ENCODE measurements at regions of chr9 and their contacts with region 1.

Region 1: GRCh38 chr9:86486891-86487837 is 133.0 kb upstream of the TUT7 start:
- DNase-seq: no peak
- H3K4me3 Mint-ChIP-seq: no peak overlapping the region
- H3K27ac Mint-ChIP-seq: no peak overlapping the region
- H3K4me1 Mint-ChIP-seq: peaks cover 25% of the 10 kb centered on the region
- H3K27me3 Mint-ChIP-seq: no peaks in the 10 kb centered on the region
- CTCF ChIP-seq: no peak

Region 2: GRCh38 chr9:86434039-86434726 is 53.0 kb before region 1 on chr9:
- CTCF ChIA-PET with region 1: interaction called, 8 read pairs
- intact Hi-C with region 1: loop called (anchors 5 kb)
- DNase-seq: peak; percentile 20
- H3K4me3 Mint-ChIP-seq: no peak overlapping the region
- H3K27ac Mint-ChIP-seq: no peak overlapping the region
- H3K4me1 Mint-ChIP-seq: no peaks in the 10 kb centered on the region
- H3K27me3 Mint-ChIP-seq: no peaks in the 10 kb centered on the region
- CTCF ChIP-seq: peak; percentile 33

Region 3: GRCh38 chr9:86948074-86948929 is 461.1 kb after region 1 on chr9:
- CTCF ChIA-PET with region 1: no interaction called
- intact Hi-C with region 1: loop called (anchors 2 kb)
- DNase-seq: peak; percentile 70
- H3K4me3 Mint-ChIP-seq: peak overlapping the region; percentile 69
- H3K27ac Mint-ChIP-seq: no peak overlapping the region
- H3K4me1 Mint-ChIP-seq: no peaks in the 10 kb centered on the region
- H3K27me3 Mint-ChIP-seq: peaks cover 53% of the 10 kb centered on the region
- CTCF ChIP-seq: peak; percentile 59

Measured in Calu3 (cell line).